AG04449 (cell line): ENCODE measurements at regions of chr15 and their contacts with region 1.

Region 1: DNA sequence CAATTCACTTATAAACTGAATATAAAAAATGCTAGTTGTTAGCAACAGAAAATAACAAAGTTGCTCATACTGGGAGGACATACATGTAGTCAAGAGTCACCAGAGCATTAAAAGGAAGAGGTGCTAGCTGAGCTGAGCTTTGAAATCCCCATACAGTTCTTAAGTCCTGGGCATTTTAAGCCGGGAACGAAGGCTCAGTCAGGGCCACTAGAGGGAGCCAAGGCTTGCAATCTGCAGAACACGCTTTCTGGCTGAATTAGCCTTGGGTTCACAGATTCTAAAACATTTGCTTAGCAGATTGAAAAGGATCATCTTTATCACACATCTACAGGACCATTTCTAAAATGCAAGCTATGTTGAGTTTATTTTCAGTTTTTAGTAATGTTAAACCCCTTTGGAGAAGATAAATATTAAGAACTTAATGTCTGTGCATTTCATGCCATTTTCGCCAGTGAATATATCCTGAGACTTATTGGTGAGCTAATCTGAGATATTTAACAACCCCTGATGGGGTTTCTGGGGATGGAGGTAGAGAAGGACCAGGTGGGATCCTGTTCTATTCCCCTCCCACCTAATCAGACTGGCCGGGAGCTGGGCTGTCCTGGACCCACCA is 26.3 kb upstream of the MNS1 start:
- DNase-seq: peak; percentile 36
- H3K4me3 ChIP-seq: no peak overlapping the region
- CTCF ChIP-seq: peak; percentile 91

Region 2: DNA sequence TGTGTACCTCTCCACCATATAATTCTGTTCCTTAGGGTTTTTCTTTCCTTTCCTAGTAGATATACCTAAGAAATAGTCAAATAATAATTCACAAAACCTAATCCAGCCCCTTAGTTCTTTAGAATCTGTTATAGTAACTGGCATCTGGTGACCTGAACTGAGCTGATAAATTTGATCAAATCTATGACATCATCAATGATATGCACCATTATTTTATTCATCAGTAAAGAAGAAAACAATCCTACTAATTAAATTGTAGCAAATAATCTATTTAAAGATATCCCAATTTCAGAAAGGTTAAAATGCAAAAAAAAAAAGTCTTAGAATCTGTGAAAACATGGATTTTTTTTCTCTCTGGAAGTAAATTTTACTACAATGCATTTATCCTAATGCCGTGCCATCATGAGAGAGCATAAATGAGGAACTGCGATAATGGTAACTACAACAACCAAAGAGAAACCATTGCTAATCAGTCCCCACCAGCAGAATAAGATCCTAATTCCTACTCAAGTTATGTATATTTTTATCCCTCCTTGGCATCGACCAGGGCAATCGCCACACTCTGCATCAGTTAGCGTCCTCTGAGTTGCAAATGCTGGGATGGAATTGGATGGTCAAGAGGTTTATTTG is 19.7 kb before region 1 on chr15:
- CTCF ChIA-PET with region 1: interaction called, 22 read pairs
- POLR2A ChIA-PET with region 1: no interaction called
- DNase-seq: no peak
- H3K4me3 ChIP-seq: no peak overlapping the region
- CTCF ChIP-seq: no peak

Region 3: DNA sequence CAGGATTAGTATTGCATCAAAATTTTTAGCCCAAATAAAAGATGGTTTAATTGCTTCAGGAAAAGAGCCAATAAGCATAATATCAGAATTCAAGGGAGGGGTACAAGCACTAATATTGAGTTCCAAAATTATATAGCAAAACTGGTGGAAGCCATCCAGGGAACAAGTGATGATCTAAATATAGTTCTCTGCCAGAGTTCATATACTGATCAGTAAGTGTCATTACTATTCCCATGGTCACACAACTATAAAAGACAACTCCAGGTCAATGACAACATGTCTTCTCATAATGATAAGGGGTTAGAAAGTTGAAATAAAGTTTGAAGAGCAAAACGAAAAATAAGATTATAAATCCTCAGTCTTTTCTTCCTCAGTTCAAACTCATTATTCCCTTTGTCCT is 184.7 kb after region 1 on chr15:
- CTCF ChIA-PET with region 1: no interaction called
- POLR2A ChIA-PET with region 1: no interaction called
- DNase-seq: no peak
- H3K4me3 ChIP-seq: no peak overlapping the region
- CTCF ChIP-seq: no peak

Region 4: GRCh38 chr15:56869573-56869972 is 378.4 kb after region 1 on chr15:
- CTCF ChIA-PET with region 1: interaction called, 12 read pairs
- POLR2A ChIA-PET with region 1: no interaction called
- DNase-seq: no peak
- H3K4me3 ChIP-seq: no peak overlapping the region
- CTCF ChIP-seq: peak; percentile 26